ENCODE measurements at regions of chr1 and their contacts with region 1.

Region 1: GRCh38 chr1:180863158-180863775 is 49.4 kb upstream of the KIAA1614 start:
- DNase-seq: peak; percentile 81
- H3K4me3 Mint-ChIP-seq: no peak overlapping the region
- H3K27ac Mint-ChIP-seq: no peak overlapping the region
- H3K4me1 Mint-ChIP-seq: peaks cover 26% of the 10 kb centered on the region
- H3K27me3 Mint-ChIP-seq: no peaks in the 10 kb centered on the region
- CTCF ChIP-seq: peak; percentile 89

Region 2: GRCh38 chr1:179706339-179706941 is 1156.8 kb before region 1 on chr1:
- CTCF ChIA-PET with region 1: no interaction called
- POLR2A ChIA-PET with region 1: no interaction called
- intact Hi-C with region 1: loop called (anchors 10 kb)
- DNase-seq: peak; percentile 78
- H3K4me3 Mint-ChIP-seq: no peak overlapping the region
- H3K27ac Mint-ChIP-seq: no peak overlapping the region
- H3K4me1 Mint-ChIP-seq: no peaks in the 10 kb centered on the region
- H3K27me3 Mint-ChIP-seq: peaks cover 18% of the 10 kb centered on the region
- CTCF ChIP-seq: peak; percentile 92

Region 3: DNA sequence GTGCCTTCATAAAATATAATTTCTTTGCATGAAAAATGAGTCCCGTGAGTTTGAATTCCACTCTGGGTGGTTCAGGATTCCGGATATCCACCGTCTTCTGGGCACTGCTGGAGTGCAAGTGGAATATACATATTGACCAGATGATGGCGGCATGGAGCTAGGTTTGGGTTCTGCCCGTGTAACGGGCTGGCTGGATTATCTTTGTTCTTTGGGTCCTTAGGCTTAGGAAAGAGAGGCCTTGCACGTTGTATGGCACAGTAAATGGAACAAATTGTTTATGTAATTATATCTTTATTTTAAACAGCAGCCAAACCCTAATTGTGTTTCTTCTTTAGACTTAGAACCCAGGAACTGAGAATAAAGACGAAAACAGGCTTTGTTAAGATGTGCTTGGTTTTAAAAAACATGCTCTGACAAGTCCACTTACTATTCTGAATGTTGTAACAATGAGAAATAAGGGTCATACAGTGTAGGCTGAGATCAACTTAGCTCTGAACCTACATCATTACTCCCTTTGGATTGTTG is 347.3 kb before region 1 on chr1:
- CTCF ChIA-PET with region 1: interaction called, 253 read pairs
- POLR2A ChIA-PET with region 1: interaction called, 114 read pairs
- intact Hi-C with region 1: loop called (anchors 1 kb)
- DNase-seq: peak; percentile 95
- H3K4me3 Mint-ChIP-seq: no peak overlapping the region
- H3K27ac Mint-ChIP-seq: peak overlapping the region; percentile 91
- H3K4me1 Mint-ChIP-seq: peaks cover 7% of the 10 kb centered on the region
- H3K27me3 Mint-ChIP-seq: no peaks in the 10 kb centered on the region
- CTCF ChIP-seq: peak; percentile 98

Region 4: DNA sequence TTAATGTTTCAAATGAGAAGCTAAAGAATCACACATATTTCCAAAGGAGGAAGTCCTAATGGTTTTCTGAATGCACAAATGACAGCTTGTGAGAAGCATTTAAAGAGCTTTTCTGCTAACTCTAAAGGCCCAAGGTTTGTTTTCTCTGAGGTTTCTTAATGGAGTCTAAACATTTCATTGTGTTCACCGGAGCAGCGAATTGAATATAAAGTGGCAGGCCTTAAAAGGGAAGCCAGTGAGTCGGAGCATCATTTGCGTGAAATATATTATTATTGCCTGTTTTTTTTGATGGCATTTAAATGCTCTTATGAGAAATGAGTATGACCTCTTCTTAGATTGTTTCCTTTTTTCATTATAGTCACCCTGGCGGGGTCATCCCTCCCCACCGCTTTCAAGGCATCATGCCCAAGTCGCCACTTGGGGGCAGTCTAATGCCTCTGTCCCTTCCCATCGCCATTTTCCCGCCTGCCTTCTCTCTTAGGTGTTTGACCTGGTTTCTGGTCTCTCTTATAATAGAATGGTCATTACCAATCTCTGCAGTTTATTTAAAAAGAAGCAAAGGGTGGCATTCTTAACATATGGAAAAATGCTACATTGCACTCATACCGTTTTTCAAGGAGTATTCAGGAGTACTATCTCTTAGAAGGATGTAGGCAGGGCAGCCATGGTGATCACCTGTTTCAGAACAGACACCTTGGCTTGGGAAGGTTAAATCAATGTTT is 329.8 kb before region 1 on chr1:
- CTCF ChIA-PET with region 1: interaction called, 81 read pairs
- POLR2A ChIA-PET with region 1: interaction called, 25 read pairs
- intact Hi-C with region 1: loop called (anchors 1 kb)
- DNase-seq: peak; percentile 88
- H3K4me3 Mint-ChIP-seq: no peak overlapping the region
- H3K27ac Mint-ChIP-seq: no peak overlapping the region
- H3K4me1 Mint-ChIP-seq: peaks cover 43% of the 10 kb centered on the region
- H3K27me3 Mint-ChIP-seq: no peaks in the 10 kb centered on the region
- CTCF ChIP-seq: peak; percentile 90

Region 5: GRCh38 chr1:180631766-180632325 is 231.4 kb before region 1 on chr1 and contains the start of gene XPR1:
- CTCF ChIA-PET with region 1: interaction called, 77 read pairs
- POLR2A ChIA-PET with region 1: interaction called, 27 read pairs
- intact Hi-C with region 1: loop called (anchors 1 kb)
- DNase-seq: peak; percentile 100
- H3K4me3 Mint-ChIP-seq: no peak within 1 kb of the TSS
- H3K27ac Mint-ChIP-seq: no peak within 1 kb of the TSS
- H3K4me1 Mint-ChIP-seq: peaks cover 11% of the 10 kb centered on the region
- H3K27me3 Mint-ChIP-seq: no peaks in the 10 kb centered on the region
- CTCF ChIP-seq: no peak
- total RNA-seq, gene XPR1: 38.6 and 39.7 TPM in 2 replicates

Region 6: DNA sequence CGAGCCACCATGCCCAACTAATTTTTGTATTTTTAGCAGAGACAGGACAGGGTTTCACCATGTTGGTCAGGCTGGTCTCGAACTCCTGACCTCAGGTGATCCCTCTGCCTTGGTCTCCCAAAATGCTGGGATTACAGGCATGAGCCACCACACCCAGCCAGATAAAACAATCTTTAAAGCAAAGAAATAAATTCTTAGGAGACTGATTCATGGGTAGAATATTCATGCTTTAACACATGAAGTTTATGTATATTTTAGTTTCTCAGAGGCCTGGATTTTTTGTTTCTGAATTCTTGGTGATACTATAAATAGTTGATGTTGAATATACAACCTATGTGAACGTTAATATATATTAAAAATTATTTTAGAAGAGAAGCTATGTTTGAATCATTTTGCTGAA is 78.0 kb before region 1 on chr1:
- CTCF ChIA-PET with region 1: interaction called, 16 read pairs
- POLR2A ChIA-PET with region 1: interaction called, 4 read pairs
- intact Hi-C with region 1: no loop called
- DNase-seq: no peak
- H3K4me3 Mint-ChIP-seq: no peak overlapping the region
- H3K27ac Mint-ChIP-seq: no peak overlapping the region
- H3K4me1 Mint-ChIP-seq: peaks cover 30% of the 10 kb centered on the region
- H3K27me3 Mint-ChIP-seq: no peaks in the 10 kb centered on the region
- CTCF ChIP-seq: no peak

Region 7: DNA sequence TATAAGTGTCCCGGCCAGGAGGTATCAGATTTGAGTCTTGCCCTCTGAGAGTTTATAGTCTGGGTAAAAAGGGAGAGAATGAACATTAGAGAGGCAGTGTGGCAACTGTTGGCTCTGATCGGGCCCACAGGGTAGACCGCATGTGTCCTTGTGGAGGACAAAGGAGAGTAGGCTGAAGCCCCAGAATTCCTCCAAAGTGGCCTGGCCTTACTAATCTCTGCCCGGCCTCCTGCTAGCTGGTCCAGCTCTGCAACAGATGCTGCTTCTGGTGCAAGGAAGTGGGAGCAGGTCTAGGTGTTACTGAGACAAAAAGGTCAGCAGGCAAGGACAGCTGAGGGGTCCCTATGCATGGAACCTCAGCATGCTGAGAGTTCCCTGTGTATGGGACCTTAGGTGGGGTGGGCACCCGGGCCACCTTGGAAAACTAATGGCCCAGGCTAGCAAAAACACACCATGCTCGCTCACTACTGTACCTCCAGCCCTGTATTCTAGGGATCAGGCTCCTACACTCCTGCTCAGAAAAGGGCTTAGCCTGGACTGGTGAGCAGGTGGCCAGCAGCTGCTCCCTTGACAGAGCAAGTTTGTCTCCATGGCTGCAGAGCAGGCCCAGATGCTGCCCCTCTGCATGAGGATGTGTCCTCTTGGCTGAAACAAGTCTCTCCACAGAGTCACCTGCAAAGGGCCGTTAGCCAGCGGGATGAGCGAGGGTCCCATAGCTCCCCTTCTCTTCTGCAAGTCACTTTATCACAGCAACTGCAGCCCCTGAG is 1771.2 kb after region 1 on chr1:
- CTCF ChIA-PET with region 1: no interaction called
- POLR2A ChIA-PET with region 1: no interaction called
- intact Hi-C with region 1: no loop called
- DNase-seq: no peak
- H3K4me3 Mint-ChIP-seq: no peak overlapping the region
- H3K27ac Mint-ChIP-seq: no peak overlapping the region
- H3K4me1 Mint-ChIP-seq: peaks cover 7% of the 10 kb centered on the region
- H3K27me3 Mint-ChIP-seq: no peaks in the 10 kb centered on the region
- CTCF ChIP-seq: no peak

Measured in MCF 10A (cell line).